Activated T-helper 1 cell treated with anti-CD3 and anti-CD28 coated beads, Interleukin-12 subunit alpha, Interleukin-12 subunit beta, Interleukin-2, Interleukin-4 antibody, amounts not matched to agents 30 ng/mL and 10 ng/mL and 1 ng/mL, durations not matched to agents 14 hours and 24 hours and 36 hours (primary cell): ENCODE measurements at regions of chr12 and their contacts with region 1.

Region 1: DNA sequence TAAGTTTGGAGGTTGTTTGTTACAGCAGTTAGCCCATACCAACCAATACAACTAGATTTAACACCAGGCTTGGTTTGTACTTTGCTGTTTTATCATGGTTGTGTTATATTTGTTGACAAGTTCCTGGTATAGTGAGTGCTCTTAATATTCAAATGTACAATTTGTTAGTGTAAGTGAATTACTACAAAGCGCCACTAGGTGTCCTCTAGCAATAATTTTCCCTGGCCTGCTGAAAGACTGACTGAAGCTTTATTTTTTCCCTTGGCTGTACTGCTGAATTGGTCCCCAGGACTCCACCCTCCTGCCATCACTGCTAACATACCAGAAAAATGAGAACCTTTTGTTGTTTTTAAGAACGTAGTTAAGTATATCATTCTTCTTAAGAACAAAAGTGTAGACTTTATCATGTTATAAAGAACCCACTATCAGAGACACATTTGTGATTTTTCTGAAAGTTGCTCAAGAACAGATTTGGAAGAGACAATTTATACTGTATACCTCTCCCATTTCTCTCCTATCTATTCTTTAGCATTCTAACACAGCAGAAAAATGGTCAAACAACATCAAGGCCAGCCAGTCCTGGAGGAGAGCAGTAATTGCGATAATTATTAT is 75.3 kb upstream of the FAR2 start:
- DNase-seq: no peak
- H3K4me3 Mint-ChIP-seq: no peak overlapping the region
- H3K27ac Mint-ChIP-seq: no peak overlapping the region
- H3K4me1 Mint-ChIP-seq: peaks cover 5% of the 10 kb centered on the region
- H3K27me3 Mint-ChIP-seq: peaks cover 27% of the 10 kb centered on the region

Region 2: DNA sequence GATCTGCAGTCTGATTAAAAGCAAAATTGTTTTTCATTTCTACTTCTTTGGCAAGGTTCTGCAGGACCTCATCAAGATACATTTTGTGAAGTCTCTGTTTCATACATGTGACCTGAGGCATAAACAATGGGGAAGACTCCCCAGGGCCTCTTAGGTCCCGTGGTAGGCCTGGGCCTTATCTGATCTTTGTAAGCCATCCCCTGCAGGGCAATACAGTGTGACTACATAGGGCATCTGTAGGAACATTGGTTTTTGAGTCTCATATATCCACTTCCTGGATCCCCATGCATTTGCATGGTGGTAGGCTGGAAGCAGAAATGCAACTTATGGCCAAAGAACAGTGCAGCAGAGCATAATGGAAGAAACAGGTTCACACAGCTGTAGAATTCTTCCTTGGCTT is 81.3 kb after region 1 on chr12:
- intact Hi-C with region 1: loop called (anchors 5 kb)
- DNase-seq: no peak
- H3K4me3 Mint-ChIP-seq: no peak overlapping the region
- H3K27ac Mint-ChIP-seq: no peak overlapping the region
- H3K4me1 Mint-ChIP-seq: peaks cover 6% of the 10 kb centered on the region
- H3K27me3 Mint-ChIP-seq: peaks cover 7% of the 10 kb centered on the region

Region 3: DNA sequence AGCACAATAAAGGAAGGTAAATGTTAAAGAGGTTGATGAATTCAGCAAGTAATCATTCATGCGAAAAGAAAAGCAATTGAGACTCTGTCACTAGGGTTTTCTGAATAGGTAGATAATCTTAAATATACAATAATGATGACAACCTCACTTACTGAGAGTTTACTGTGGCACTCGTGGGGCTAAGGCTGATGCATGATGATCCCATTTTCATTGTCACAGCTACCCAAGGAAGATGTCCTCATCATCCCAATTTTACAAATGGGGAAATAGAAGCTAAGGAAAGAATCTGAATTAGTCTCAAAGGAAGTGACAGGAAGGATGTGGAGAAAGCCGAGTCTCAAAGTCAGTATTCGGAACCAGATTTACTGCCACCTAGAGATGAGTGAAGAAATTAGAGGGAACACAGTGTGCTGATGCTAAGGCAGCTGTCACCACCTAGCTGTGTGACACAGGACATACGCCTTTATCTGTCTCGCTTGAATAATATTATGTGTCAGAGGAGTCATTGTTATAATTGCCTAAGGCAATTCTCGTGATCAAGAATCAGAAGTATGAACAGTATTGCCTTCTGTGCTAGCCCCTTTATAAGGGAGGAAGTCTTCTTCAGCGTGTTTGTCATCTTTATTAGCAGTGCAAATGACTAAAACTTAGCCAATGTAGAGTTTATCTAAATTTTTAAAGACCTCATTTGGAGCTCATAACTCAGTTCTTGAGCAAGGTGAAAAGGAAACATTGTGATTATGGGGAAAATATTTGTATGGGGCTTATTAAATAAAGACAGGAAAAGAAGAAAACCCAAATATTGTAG is 244.0 kb after region 1 on chr12:
- intact Hi-C with region 1: loop called (anchors 1 kb)
- DNase-seq: peak; percentile 23
- H3K4me3 Mint-ChIP-seq: no peak overlapping the region
- H3K27ac Mint-ChIP-seq: no peak overlapping the region
- H3K4me1 Mint-ChIP-seq: peaks cover 11% of the 10 kb centered on the region
- H3K27me3 Mint-ChIP-seq: peaks cover 3% of the 10 kb centered on the region

Region 4: GRCh38 chr12:29710104-29710503 is 636.4 kb after region 1 on chr12:
- intact Hi-C with region 1: no loop called
- DNase-seq: no peak
- H3K4me3 Mint-ChIP-seq: no peak overlapping the region
- H3K27ac Mint-ChIP-seq: no peak overlapping the region
- H3K4me1 Mint-ChIP-seq: no peaks in the 10 kb centered on the region
- H3K27me3 Mint-ChIP-seq: peaks cover 1% of the 10 kb centered on the region

Region 5: DNA sequence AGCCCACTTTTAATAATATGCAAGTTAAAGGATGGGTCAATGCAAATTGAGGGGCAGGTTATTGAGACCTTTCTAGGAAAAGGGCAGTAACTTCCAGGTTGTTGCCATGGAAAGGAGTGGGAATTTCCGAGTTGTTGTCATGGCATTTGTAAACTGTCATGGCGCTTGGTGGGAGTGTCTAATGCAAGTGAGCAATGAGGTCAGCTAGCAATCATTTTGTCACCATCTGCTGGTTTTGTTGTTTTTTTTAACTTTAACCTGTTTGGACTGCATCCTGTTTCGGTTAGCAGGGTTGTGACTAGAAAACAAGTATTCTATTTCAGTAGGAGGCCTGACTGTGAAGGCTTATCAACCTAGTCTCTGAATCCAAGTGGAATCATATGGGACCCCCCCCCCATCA is 1767.0 kb after region 1 on chr12:
- intact Hi-C with region 1: loop called (anchors 5 kb)
- DNase-seq: no peak
- H3K4me3 Mint-ChIP-seq: no peak overlapping the region
- H3K27ac Mint-ChIP-seq: no peak overlapping the region
- H3K4me1 Mint-ChIP-seq: no peaks in the 10 kb centered on the region
- H3K27me3 Mint-ChIP-seq: peaks cover 15% of the 10 kb centered on the region